ENCODE measurements at regions of chr3 and their contacts with region 1.

Region 1: GRCh38 chr3:6392123-6392522 is 468.8 kb upstream of the GRM7 start:
- DNase-seq: no peak
- ATAC-seq: no peak
- H3K4me3 ChIP-seq: no peak overlapping the region
- H3K4me3 Mint-ChIP-seq: no peak overlapping the region
- H3K27ac ChIP-seq: no peak overlapping the region
- H3K27ac Mint-ChIP-seq: no peak overlapping the region
- H3K4me1 ChIP-seq: no peaks in the 10 kb centered on the region
- H3K4me1 Mint-ChIP-seq: no peaks in the 10 kb centered on the region
- H3K27me3 ChIP-seq: no peaks in the 10 kb centered on the region
- H3K27me3 Mint-ChIP-seq: no peaks in the 10 kb centered on the region

Region 2: DNA sequence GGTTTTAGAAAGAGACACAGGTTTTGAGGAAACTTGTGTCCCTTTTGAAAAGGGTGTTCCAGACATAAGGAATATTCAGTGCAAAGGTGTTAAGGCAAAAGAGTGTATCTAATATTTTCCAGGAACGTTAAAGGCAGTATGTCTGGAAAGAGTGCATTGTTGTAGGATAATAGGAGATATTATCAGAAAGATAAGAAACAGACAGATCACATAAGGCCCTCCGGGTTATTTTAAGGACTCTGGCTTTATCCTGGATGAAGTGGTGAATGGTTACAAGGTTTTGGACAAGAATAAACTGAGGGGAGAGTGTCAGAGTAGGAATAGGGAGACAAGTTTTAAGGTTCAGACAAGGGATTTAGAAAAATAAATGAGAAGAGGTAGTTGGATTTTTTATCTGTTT is 25.0 kb before region 1 on chr3:
- CTCF ChIA-PET with region 1: no interaction called
- POLR2A ChIA-PET with region 1: no interaction called
- intact Hi-C with region 1: no loop called
- DNase-seq: no peak
- ATAC-seq: no peak
- H3K4me3 ChIP-seq: no peak overlapping the region
- H3K4me3 Mint-ChIP-seq: no peak overlapping the region
- H3K27ac ChIP-seq: no peak overlapping the region
- H3K27ac Mint-ChIP-seq: no peak overlapping the region
- H3K4me1 ChIP-seq: no peaks in the 10 kb centered on the region
- H3K4me1 Mint-ChIP-seq: no peaks in the 10 kb centered on the region
- H3K27me3 ChIP-seq: no peaks in the 10 kb centered on the region
- H3K27me3 Mint-ChIP-seq: no peaks in the 10 kb centered on the region

Region 3: DNA sequence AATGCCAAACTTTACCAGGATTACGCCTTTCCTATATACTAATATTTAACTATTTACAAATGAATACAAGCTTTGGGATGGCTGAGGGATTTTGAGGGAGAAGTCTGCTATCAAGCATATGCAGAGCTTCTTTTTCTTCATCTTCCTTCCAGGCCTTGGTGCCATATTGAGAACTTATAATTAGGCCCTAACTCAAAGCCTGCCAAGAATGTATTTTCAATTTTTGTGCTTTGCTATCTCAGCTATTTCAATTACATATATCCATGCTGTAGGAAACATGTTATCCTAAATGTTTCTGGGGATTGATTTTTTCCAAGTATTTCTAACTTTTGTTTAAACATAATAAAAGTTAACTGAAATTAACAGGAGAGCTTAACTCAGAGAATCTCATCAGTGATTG is 43.8 kb after region 1 on chr3:
- CTCF ChIA-PET with region 1: no interaction called
- POLR2A ChIA-PET with region 1: no interaction called
- intact Hi-C with region 1: loop called in 1 of 2 experiments (anchors 1 kb)
- DNase-seq: no peak
- ATAC-seq: no peak
- H3K4me3 ChIP-seq: no peak overlapping the region
- H3K4me3 Mint-ChIP-seq: no peak overlapping the region
- H3K27ac ChIP-seq: no peak overlapping the region
- H3K27ac Mint-ChIP-seq: no peak overlapping the region
- H3K4me1 ChIP-seq: no peaks in the 10 kb centered on the region
- H3K4me1 Mint-ChIP-seq: no peaks in the 10 kb centered on the region
- H3K27me3 ChIP-seq: no peaks in the 10 kb centered on the region
- H3K27me3 Mint-ChIP-seq: no peaks in the 10 kb centered on the region

Region 4: GRCh38 chr3:6504347-6504746 is 112.2 kb after region 1 on chr3:
- CTCF ChIA-PET with region 1: no interaction called
- POLR2A ChIA-PET with region 1: no interaction called
- intact Hi-C with region 1: no loop called
- DNase-seq: no peak
- ATAC-seq: no peak
- H3K4me3 ChIP-seq: no peak overlapping the region
- H3K4me3 Mint-ChIP-seq: no peak overlapping the region
- H3K27ac ChIP-seq: no peak overlapping the region
- H3K27ac Mint-ChIP-seq: no peak overlapping the region
- H3K4me1 ChIP-seq: no peaks in the 10 kb centered on the region
- H3K4me1 Mint-ChIP-seq: peaks cover 0 to 2% (median 0%) of the 10 kb centered on the region in 7 donors
- H3K27me3 ChIP-seq: no peaks in the 10 kb centered on the region
- H3K27me3 Mint-ChIP-seq: no peaks in the 10 kb centered on the region

Region 5: DNA sequence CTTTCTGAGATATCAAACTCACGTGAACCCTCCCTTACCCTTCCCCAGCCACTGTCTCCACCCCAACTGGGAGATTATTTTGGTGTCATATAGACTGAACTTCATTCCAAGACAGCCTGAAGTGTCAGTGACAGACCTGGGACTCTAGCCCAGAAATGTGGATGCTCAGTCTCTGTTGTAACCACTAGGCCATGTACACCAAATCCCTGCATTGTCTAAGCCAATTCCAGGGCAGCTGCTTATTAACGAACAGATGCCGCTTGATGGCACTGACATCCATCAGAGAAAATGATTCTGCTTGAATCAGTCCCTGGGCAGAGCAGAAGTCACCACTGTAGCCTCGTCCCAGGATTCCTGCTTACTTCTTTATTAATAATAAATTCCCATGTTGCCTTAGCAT is 774.3 kb after region 1 on chr3:
- CTCF ChIA-PET with region 1: no interaction called
- POLR2A ChIA-PET with region 1: no interaction called
- intact Hi-C with region 1: no loop called
- DNase-seq: no peak
- ATAC-seq: no peak
- H3K4me3 ChIP-seq: no peak overlapping the region
- H3K4me3 Mint-ChIP-seq: no peak overlapping the region
- H3K27ac ChIP-seq: no peak overlapping the region
- H3K27ac Mint-ChIP-seq: no peak overlapping the region
- H3K4me1 ChIP-seq: no peaks in the 10 kb centered on the region
- H3K4me1 Mint-ChIP-seq: no peaks in the 10 kb centered on the region
- H3K27me3 ChIP-seq: no peaks in the 10 kb centered on the region
- H3K27me3 Mint-ChIP-seq: no peaks in the 10 kb centered on the region

Measured in naive thymus-derived CD4-positive, alpha-beta T cell (primary cell).